Activated CD4-positive, alpha-beta T cell treated with anti-CD3 and anti-CD28 coated beads for 36 hours (primary cell): ENCODE measurements at regions of chr6 and their contacts with region 1.

Region 1: DNA sequence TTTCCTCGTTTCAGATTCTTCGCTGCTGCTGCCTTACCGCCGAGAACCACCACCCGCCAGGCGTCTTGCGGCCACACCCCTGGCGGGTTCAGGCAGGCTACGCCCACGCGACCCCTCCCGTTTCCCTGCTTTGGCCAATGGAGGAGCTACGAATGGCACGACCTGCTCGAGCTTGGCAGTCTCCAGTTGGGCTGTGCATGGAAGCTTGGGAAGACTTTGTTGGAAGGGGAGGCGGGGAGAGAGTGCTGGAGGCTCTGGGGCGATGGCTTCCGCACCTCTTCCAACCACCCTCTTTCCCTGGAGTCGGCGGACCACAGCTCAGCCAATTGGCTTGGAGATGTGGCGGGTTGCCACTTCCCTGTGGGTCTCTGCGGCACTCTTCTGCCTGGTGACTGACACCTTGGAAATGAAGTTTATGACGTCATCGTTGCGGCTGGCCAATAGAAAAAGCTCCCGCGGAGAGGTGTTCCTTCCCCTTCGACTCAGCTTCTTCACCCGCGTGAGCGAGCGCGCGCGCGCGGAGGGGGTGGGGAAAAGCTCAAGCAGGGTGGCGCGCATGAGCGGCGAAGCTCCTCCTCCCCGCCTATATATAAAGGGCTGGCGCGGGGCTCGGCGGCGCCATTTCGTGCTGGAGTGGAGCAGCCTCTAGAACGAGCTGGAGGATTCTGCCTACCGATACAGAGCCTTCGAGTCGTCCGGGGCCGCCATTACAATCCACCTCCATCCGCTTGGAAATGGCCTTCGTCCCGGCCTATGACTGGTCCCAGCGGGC is 3.4 kb downstream of the BRD2 start:
- DNase-seq: peak; percentile 100
- ATAC-seq: peak; percentile 43
- H3K4me3 Mint-ChIP-seq: peak overlapping the region; percentile 98
- H3K27ac Mint-ChIP-seq: peak overlapping the region; percentile 100
- H3K4me1 Mint-ChIP-seq: peaks cover 27% of the 10 kb centered on the region
- H3K27me3 Mint-ChIP-seq: no peaks in the 10 kb centered on the region

Region 2: DNA sequence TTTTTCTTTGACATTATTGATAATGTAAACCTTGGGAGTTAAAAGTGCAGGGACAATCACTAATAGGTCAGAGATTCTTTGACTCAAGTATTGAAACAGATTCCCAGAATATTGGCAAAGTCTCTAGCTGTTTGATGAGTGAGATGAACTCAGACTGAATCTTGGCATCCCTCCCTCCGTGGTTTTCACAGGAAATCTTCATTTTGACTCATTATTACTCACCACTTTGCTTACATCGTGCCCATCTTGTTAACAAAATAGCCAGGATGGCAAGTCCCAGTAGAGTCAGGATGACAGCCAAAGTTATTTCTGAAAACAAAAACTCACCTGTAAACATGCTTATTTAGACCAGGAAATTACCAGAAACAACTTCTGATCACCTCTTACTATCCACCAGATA is 602.1 kb before region 1 on chr6:
- CTCF ChIA-PET with region 1: no interaction called
- POLR2A ChIA-PET with region 1: no interaction called
- intact Hi-C with region 1: no loop called
- DNase-seq: peak; percentile 61
- ATAC-seq: peak; percentile 84
- H3K4me3 Mint-ChIP-seq: no peak overlapping the region
- H3K27ac Mint-ChIP-seq: no peak overlapping the region
- H3K4me1 Mint-ChIP-seq: peaks cover 12% of the 10 kb centered on the region
- H3K27me3 Mint-ChIP-seq: peaks cover 31% of the 10 kb centered on the region

Region 3: GRCh38 chr6:32838114-32838958 is 133.4 kb before region 1 on chr6 and contains the start of gene TAP2:
- CTCF ChIA-PET with region 1: interaction called, 16 read pairs
- POLR2A ChIA-PET with region 1: interaction called, 69 read pairs
- intact Hi-C with region 1: loop called in 1 of 2 experiments (anchors 1 kb)
- DNase-seq: peak; percentile 99
- ATAC-seq: peak; percentile 82
- H3K4me3 Mint-ChIP-seq: peak within 1 kb of the TSS; percentile 95
- H3K27ac Mint-ChIP-seq: peak within 1 kb of the TSS; percentile 94
- H3K4me1 Mint-ChIP-seq: peaks cover 79% of the 10 kb centered on the region
- H3K27me3 Mint-ChIP-seq: no peaks in the 10 kb centered on the region
- total RNA-seq, gene TAP2: 96.4 to 150 TPM

Region 4: DNA sequence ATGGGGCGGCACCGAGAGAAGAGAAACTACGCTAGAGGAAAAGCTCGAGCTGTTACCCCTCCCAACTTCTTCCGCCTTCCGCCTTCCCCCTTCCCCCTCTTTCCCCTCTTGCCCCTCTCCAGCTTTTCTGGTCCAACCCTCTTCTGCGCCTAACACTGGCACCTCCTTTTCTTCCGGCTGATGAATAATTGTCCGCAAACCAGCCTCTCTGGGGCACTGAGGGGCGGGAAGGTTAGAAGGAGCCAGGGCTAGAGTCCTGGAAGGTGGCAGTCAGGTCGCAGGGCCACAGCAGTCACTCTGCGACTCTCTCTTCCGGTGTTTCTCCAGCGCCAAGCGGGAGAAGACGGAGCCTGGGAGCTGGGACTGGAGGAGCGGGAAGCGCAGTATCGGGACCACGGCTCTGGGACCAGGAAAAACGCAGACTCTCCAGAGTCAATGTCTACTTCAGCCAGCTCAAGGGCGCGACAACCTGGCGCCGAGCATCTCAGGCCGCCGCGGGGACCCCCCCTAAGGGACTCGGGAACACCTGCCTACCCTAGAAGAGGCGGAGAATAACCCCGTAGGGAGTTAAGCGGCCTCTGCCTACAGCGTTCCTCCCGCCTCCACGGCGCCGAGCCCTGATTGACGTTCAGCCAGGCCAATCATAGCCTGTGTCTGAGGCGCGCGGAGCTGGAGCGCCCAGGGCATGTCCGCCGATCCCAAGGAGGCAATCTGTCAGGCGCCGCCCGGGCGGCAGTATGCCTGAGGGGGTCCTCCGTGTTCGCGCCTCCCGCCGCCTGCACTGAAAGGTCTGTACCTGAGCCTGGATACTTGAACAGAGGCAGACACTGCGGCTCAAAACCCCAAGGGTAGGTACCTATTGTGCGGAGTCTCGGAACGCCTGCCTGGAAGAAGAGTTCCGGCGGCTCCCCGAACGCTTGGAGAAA is 77.4 kb before region 1 on chr6:
- CTCF ChIA-PET with region 1: interaction called, 16 read pairs
- POLR2A ChIA-PET with region 1: interaction called, 48 read pairs
- intact Hi-C with region 1: loop called (anchors 1 kb)
- DNase-seq: peak; percentile 96
- ATAC-seq: peak; percentile 99
- H3K4me3 Mint-ChIP-seq: peak overlapping the region; percentile 93
- H3K27ac Mint-ChIP-seq: peak overlapping the region; percentile 94
- H3K4me1 Mint-ChIP-seq: peaks cover 25% of the 10 kb centered on the region
- H3K27me3 Mint-ChIP-seq: no peaks in the 10 kb centered on the region

Region 5: GRCh38 chr6:32952817-32953739 is 18.7 kb before region 1 on chr6 and contains the start of gene HLA-DMA:
- CTCF ChIA-PET with region 1: interaction called, 197 read pairs
- POLR2A ChIA-PET with region 1: interaction called, 83 read pairs
- intact Hi-C with region 1: loop called (anchors 1 to 2 kb)
- DNase-seq: peak; percentile 81
- ATAC-seq: peak; percentile 97
- H3K4me3 Mint-ChIP-seq: peak within 1 kb of the TSS; percentile 68
- H3K27ac Mint-ChIP-seq: peak within 1 kb of the TSS; percentile 76
- H3K4me1 Mint-ChIP-seq: peaks cover 56% of the 10 kb centered on the region
- H3K27me3 Mint-ChIP-seq: no peaks in the 10 kb centered on the region
- total RNA-seq, gene HLA-DMA: 11.8 TPM

Region 6: DNA sequence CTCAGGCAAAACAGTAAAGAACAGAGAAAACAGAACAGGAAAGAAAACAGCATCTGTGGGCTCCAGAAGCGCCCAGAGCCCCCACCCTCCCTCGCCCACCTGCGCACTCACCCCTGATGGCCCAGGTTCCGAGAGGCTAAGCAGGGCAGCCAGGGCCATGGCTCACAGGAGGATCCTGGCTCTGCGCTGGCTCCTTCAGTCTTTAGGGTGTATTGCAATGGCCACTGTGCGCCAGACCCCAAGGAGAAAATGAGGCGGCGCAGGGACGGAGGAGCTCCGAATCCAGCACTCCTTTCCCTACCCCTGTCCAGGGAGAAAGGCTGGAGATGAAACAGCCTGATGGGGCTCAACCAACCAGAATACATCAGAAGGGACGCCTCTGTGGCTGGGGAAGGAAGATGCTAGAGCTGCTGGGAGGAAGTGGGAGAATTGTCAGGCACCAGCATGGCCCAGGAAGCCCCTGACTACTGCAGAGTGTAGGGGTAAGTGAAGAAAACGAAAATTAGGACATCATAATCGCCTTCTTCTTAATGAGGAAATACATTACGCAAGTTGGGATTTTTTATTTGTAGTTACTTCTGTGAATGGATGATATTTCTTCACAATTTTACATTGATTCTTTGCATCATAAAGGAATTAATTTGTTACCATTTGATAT is 171.5 kb after region 1 on chr6:
- CTCF ChIA-PET with region 1: no interaction called
- POLR2A ChIA-PET with region 1: no interaction called
- intact Hi-C with region 1: no loop called
- DNase-seq: no peak
- ATAC-seq: no peak
- H3K4me3 Mint-ChIP-seq: no peak overlapping the region
- H3K27ac Mint-ChIP-seq: no peak overlapping the region
- H3K4me1 Mint-ChIP-seq: no peaks in the 10 kb centered on the region
- H3K27me3 Mint-ChIP-seq: peaks cover 22% of the 10 kb centered on the region

Region 7: DNA sequence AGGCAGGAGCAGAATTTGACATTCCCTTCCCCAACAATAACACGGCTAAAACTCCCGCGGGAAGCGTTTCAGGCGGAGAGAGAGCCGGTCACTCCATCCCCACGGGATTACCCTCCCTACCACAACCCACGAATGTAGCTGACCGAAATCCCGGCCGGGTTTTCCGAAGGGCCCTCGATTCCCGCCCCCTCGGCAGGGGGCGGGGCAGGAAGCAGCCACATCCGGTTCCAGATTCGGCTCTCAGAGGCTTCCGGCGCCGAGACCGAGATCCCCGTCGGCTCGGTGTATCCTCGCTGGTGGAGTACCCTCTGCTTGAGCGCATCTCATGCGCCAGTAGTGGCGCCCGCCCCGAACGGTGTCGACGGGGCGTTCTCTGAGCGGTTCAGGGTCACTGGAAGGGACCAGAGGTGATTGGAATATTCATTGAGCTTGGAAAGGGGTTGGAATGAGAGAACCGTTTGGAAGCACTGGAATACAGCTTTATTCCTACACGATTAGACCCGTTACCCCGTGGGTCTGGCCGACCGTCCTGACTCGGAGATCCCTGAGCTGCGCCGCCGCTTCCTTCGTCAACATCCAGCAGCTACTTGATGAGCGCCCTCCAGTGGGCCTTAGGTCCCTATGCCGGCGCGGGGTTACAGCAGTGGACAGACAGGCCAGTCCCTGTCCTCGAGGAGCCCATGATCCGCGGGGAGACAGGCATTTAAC is 327.6 kb after region 1 on chr6:
- CTCF ChIA-PET with region 1: no interaction called
- POLR2A ChIA-PET with region 1: interaction called, 4 read pairs
- intact Hi-C with region 1: loop called in 1 of 2 experiments (anchors 5 kb)
- DNase-seq: peak; percentile 97
- ATAC-seq: peak; percentile 87
- H3K4me3 Mint-ChIP-seq: peak overlapping the region; percentile 80
- H3K27ac Mint-ChIP-seq: peak overlapping the region; percentile 98
- H3K4me1 Mint-ChIP-seq: peaks cover 28% of the 10 kb centered on the region
- H3K27me3 Mint-ChIP-seq: no peaks in the 10 kb centered on the region

Region 8: DNA sequence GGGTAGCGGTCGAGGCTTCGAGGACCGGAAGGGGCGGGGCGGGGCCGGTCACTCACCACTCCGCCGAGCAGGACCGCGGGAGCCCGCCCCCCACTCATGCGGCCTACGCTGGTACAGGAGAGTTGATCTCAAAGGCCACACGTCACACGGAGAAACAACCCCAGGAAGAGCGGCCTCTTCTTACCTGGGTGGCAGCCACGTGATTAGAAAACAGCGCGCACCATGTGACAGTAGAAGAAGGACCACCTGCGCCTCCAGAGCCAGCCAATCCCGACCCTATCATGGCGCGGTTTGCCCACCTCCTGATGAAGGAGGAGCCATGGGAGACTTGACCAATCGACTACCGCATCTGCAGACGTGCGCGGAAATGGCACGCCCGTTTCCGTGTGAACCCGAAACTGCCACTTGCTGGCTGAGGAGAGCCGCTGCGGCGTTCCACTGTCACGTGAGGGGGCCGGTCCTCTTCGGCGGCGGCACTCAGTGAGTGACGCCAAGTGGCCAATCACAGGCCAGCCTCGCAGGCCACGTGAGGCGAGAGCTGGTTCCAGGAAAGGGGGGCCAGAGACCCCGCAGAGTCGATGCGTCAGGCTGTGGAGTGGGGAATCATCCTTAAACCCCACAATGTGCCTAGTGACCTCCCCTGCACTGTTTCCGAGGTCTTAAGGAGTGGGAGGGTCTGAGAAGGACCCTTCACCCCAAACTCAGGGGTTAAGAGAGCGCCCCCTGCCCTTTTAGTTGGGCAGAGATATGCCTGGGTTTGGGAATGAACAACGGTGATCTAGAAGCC is 446.3 kb after region 1 on chr6 and contains the start of gene CUTA:
- CTCF ChIA-PET with region 1: no interaction called
- POLR2A ChIA-PET with region 1: no interaction called
- intact Hi-C with region 1: loop called in 1 of 2 experiments (anchors 1 kb)
- DNase-seq: peak; percentile 100
- ATAC-seq: peak; percentile 87
- H3K4me3 Mint-ChIP-seq: peak within 1 kb of the TSS; percentile 96
- H3K27ac Mint-ChIP-seq: peak within 1 kb of the TSS; percentile 98
- H3K4me1 Mint-ChIP-seq: peaks cover 54% of the 10 kb centered on the region
- H3K27me3 Mint-ChIP-seq: no peaks in the 10 kb centered on the region
- total RNA-seq, gene CUTA: 154 to 188 TPM